Astrocyte of the cerebellum (primary cell): ENCODE measurements at regions of chr10 and their contacts with region 1.

Region 1: GRCh38 chr10:20094226-20094976 is 278.2 kb downstream of the PLXDC2 start:
- DNase-seq: no peak
- H3K4me3 ChIP-seq: no peak overlapping the region
- CTCF ChIP-seq: no peak

Region 2: DNA sequence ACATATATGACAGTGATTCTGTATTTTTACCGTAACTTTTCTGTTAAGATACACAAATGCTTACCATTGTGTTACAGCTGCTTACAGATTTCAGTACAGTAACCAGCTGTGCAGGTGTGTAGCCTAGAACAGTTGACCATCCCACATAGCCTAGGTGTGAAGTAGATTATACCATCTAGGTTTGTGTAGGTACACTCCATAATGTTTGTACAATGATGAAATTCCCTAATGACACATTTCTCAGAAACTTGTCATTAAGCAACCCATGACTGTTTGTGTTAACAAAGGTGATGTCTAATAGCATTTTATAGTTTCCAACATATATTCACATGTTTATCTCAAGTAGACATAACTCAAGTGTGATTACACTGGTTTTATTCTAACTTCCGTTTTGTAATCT is 59.7 kb before region 1 on chr10:
- in situ Hi-C with region 1: loop called (anchors 10 kb)
- DNase-seq: no peak
- H3K4me3 ChIP-seq: no peak overlapping the region
- CTCF ChIP-seq: no peak

Region 3: GRCh38 chr10:20059084-20059835 is 35.1 kb before region 1 on chr10:
- in situ Hi-C with region 1: no loop called
- DNase-seq: peak; percentile 52
- H3K4me3 ChIP-seq: no peak overlapping the region
- CTCF ChIP-seq: no peak

Region 4: DNA sequence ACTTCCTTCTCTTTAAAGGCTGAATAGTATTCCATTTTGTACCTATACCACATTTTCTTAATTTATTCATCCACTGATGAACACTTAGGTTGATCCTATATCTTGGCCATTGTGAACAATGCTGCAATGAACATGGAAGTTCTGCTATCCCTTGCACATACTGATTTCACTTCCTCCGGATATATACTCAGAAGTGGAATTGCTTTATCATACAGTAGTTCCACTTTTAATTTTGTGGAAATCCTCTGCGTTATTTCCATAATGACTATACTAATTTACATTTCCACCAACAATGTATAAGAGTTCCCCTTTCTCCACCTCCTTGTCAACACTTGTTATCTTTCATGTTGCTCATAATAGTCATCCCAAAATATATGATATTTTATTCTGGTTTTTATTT is 34.4 kb after region 1 on chr10:
- in situ Hi-C with region 1: no loop called
- DNase-seq: no peak
- H3K4me3 ChIP-seq: no peak overlapping the region
- CTCF ChIP-seq: no peak

Region 5: GRCh38 chr10:20147684-20148083 is 53.3 kb after region 1 on chr10:
- in situ Hi-C with region 1: no loop called
- DNase-seq: no peak
- H3K4me3 ChIP-seq: no peak overlapping the region
- CTCF ChIP-seq: no peak